SK-MEL-5 (cell line): ENCODE measurements at regions of chr5 and their contacts with region 1.

Region 1: DNA sequence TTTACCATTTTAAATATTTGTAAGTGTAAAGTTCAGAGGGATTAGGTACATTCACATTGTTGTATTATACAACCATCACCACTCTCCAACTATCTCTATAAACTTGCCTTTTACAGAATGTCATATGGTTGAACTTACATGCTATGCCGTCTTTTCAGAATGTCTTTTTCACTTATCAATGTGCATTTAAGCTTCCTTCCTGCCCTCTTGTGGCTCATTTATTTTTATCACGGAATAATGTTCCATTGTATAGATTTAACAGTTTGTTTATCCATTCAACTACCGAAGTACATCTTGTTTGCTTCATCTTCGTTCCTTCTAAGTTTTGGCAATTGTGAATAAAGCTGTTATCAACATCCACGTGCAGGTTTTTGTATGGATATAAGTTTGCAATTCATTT is 133.3 kb upstream of the C6 start:
- DNase-seq: peak; percentile 79

Region 2: DNA sequence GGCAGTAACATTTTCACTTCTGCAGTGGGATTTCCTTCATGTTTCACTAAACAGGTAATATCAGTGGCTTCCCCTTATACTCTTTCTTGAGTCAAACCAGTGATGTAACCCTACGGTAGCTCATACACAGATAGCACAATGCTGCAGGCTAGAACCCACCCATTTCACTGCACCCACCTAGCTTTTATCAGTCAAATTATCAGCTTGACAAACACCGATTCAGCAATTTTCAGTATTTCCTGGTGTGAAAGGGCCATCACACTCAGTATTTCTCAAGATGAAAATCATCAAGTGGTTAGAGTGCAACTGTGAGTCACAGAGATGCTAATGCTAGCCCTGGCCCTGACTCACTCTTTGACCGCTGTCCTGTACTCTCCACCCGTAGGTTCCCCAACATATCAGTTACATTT is 909.2 kb before region 1 on chr5:
- in situ Hi-C with region 1: no loop called
- DNase-seq: no peak

Region 3: GRCh38 chr5:41270423-41271251 is 76.0 kb before region 1 on chr5:
- in situ Hi-C with region 1: loop called (anchors 10 kb)
- DNase-seq: peak; percentile 94